ENCODE measurements at regions of chr16 and their contacts with region 1.

Region 1: GRCh38 chr16:67806428-67807147 is at the starts of genes RANBP10 and TSNAXIP1:
- DNase-seq: peak; percentile 98 to 99
- H3K4me3 ChIP-seq: peak within 1 kb of the TSS; percentile 21 to 77 (median 64)
- H3K27ac ChIP-seq: peak within 1 kb of the TSS; percentile 31 to 76 (median 58)
- H3K4me1 ChIP-seq: peaks cover 17% of the 10 kb centered on the region in 2 donors
- H3K27me3 ChIP-seq: no peaks in the 10 kb centered on the region
- CTCF ChIP-seq: no peak
- POLR2A ChIP-seq: peak; percentile 63 to 90
- total RNA-seq, gene RANBP10: 9.2 to 13.0 (median 11.0) TPM
- total RNA-seq, gene TSNAXIP1: 0.34 to 3.2 (median 0.93) TPM

Region 2: DNA sequence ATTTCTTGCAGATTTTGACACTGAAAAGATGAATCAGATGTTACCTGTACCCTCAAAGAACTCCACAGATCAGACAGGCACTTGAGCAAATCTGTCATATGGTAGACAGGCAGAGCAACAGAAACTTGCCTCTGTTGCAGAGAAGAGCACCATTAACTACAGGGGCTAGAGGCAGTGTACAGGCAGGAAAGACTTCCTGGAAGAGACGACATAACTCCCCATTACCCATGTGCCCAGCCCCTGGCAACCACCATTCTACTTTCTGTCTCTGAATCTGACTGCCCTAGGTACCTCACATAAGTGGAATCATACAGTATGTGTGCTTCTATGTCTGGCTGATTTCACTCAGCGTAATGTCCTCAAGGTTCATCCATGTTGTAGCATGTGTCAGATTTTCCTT is 103.0 kb before region 1 on chr16:
- intact Hi-C with region 1: no loop called
- DNase-seq: no peak
- H3K4me3 ChIP-seq: no peak overlapping the region
- H3K27ac ChIP-seq: no peak overlapping the region
- H3K4me1 ChIP-seq: no peaks in the 10 kb centered on the region
- H3K27me3 ChIP-seq: no peaks in the 10 kb centered on the region
- CTCF ChIP-seq: no peak
- POLR2A ChIP-seq: no peak

Region 3: GRCh38 chr16:67726106-67727034 is 80.2 kb before region 1 on chr16:
- intact Hi-C with region 1: no loop called
- DNase-seq: peak; percentile 8 to 13
- H3K4me3 ChIP-seq: no peak overlapping the region
- H3K27ac ChIP-seq: no peak overlapping the region
- H3K4me1 ChIP-seq: peaks cover 0 to 7% of the 10 kb centered on the region in 2 donors
- H3K27me3 ChIP-seq: no peaks in the 10 kb centered on the region
- CTCF ChIP-seq: no peak
- POLR2A ChIP-seq: no peak

Region 4: DNA sequence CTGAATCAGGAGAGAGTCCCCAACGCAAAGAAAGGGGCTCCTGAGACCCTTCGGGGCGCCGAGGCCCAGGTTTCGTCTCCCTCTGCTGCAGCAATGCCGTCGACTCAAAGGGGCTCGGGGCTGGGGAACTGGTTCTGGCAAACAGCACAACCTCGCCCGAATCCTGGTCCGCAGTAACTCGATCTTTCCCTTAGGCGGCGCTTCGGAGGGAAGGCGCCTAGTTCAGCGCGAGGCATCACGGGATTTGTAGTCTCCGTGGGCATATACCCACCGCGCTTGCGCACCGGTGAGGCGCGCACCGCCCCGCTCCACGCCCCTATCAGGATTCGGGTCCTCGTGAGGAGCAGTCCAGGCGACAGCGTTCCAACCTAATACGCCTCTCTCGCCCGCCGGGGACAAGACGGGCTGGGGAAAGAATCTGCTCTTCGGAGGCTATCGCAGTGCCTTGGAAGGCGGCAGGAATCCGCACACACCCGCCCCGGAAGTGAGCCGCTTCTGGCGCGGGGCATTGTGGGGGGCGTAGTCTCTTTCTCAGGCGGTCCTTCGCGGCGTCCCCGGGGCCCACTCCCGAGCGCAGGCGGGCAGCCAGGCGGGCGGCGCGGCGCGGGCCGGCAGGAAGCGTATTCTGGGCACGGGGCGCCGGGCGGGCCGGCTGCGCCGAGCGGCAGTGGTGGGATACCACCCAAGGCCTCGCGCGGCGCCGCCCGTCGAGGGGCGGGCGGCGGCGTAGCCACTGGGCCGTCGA is 35.3 kb after region 1 on chr16 and contains the start of gene THAP11:
- intact Hi-C with region 1: loop called (anchors 5 kb)
- DNase-seq: peak; percentile 92 to 95
- H3K4me3 ChIP-seq: peak within 1 kb of the TSS; percentile 62 to 78 (median 68)
- H3K27ac ChIP-seq: peak within 1 kb of the TSS; percentile 100
- H3K4me1 ChIP-seq: peaks cover 33 to 35% of the 10 kb centered on the region in 2 donors
- H3K27me3 ChIP-seq: no peaks in the 10 kb centered on the region
- CTCF ChIP-seq: peak; percentile 70 to 94 (median 88)
- POLR2A ChIP-seq: peak in 1 of 2 donors; percentile 74
- total RNA-seq, gene THAP11: 53.5 to 79.0 (median 67.8) TPM

Region 5: DNA sequence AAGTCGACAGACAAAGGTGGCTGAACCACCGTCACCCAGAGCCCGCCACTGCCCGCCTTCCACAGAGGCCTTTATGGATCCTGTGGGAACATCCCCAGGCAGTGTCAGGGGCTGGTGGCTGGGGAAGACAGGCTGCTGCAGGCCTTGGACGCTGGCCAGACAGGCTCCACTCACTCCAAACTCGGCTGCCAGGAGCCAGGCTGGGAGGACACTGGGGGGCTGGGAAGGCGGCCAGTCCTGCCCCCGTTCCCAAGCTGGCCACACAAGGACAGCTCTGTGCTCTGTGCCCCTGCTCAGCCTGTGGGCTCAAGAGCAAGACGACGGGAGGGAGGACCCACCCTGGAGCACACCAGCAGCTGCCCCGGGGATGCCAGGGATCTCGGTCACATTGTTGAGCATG is 144.9 kb after region 1 on chr16:
- intact Hi-C with region 1: no loop called
- DNase-seq: no peak
- H3K4me3 ChIP-seq: no peak overlapping the region
- H3K27ac ChIP-seq: no peak overlapping the region
- H3K4me1 ChIP-seq: peaks cover 0 to 5% of the 10 kb centered on the region in 2 donors
- H3K27me3 ChIP-seq: no peaks in the 10 kb centered on the region
- CTCF ChIP-seq: no peak
- POLR2A ChIP-seq: no peak

Measured in thyroid gland (tissue), 4 donors.